CD8-positive, alpha-beta T cell (primary cell): ENCODE measurements at regions of chr12 and their contacts with region 1.

Region 1: GRCh38 chr12:51871126-51871525 is 16.8 kb upstream of the ANKRD33 start:
- DNase-seq: peak in 1 of 9 experiments; percentile 25
- ATAC-seq: no peak
- H3K4me3 ChIP-seq: no peak overlapping the region
- H3K4me3 Mint-ChIP-seq: no peak overlapping the region
- H3K27ac ChIP-seq: no peak overlapping the region
- H3K27ac Mint-ChIP-seq: no peak overlapping the region
- H3K4me1 ChIP-seq: peaks cover 6% of the 10 kb centered on the region
- H3K4me1 Mint-ChIP-seq: peaks cover 11% of the 10 kb centered on the region
- H3K27me3 ChIP-seq: peaks cover 8 to 15% of the 10 kb centered on the region in 2 experiments
- H3K27me3 Mint-ChIP-seq: peaks cover 49% of the 10 kb centered on the region
- CTCF ChIP-seq: no peak

Region 2: DNA sequence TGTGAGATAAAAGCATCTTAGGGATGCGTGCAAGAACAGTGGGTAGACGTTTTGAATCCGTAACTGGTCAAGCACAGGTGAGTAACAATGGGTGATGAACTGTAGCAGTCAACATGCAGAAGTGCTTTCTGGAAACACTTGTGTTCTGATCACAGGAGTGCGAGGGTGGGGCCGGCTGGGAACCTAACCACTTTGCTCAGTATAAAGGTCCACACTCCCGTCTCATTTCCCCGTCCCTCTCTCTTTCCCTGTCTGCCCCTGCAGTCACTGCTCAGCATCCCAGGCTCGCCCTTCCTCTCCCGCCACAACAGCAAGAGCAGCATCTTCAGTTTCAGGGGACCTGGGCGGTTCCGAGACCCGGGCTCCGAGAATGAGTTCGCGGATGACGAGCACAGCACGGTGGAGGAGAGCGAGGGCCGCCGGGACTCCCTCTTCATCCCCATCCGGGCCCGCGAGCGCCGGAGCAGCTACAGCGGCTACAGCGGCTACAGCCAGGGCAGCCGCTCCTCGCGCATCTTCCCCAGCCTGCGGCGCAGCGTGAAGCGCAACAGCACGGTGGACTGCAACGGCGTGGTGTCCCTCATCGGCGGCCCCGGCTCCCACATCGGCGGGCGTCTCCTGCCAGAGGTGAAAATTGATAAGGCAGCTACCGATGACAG is 149.7 kb before region 1 on chr12:
- CTCF ChIA-PET with region 1: no interaction called
- POLR2A ChIA-PET with region 1: no interaction called
- intact Hi-C with region 1: loop called in 1 of 2 experiments (anchors 1 kb)
- DNase-seq: peak; percentile 2 to 70 (median 44)
- ATAC-seq: peak; percentile 76
- H3K4me3 ChIP-seq: peak overlapping the region in 1 of 2 experiments; percentile 53
- H3K4me3 Mint-ChIP-seq: peak overlapping the region; percentile 63
- H3K27ac ChIP-seq: no peak overlapping the region
- H3K27ac Mint-ChIP-seq: no peak overlapping the region
- H3K4me1 ChIP-seq: peaks cover 4% of the 10 kb centered on the region
- H3K4me1 Mint-ChIP-seq: peaks cover 10% of the 10 kb centered on the region
- H3K27me3 ChIP-seq: peaks cover 0 to 9% of the 10 kb centered on the region in 2 experiments
- H3K27me3 Mint-ChIP-seq: peaks cover 16% of the 10 kb centered on the region
- CTCF ChIP-seq: no peak

Region 3: DNA sequence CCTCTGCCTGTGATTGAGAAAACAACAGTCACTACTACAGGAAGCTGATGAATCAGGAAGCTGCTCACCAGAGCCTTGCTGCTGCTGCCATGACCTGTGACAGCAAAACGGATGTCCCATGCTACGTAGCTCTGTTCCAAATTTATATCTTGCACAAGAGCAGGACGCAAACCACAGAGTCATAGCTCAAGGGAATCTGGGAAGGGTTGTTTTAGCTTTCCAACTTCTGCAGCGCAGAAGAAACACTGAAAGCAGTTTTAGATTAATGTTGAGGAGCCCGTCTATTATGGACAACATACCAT is 14.8 kb after region 1 on chr12:
- CTCF ChIA-PET with region 1: interaction called, 14 read pairs
- POLR2A ChIA-PET with region 1: interaction called, 3 read pairs
- intact Hi-C with region 1: no loop called
- DNase-seq: peak; percentile 8 to 77 (median 52)
- ATAC-seq: peak; percentile 97
- H3K4me3 ChIP-seq: no peak overlapping the region
- H3K4me3 Mint-ChIP-seq: peak overlapping the region; percentile 55
- H3K27ac ChIP-seq: peak overlapping the region in 1 of 2 experiments; percentile 62
- H3K27ac Mint-ChIP-seq: peak overlapping the region; percentile 91
- H3K4me1 ChIP-seq: peaks cover 8% of the 10 kb centered on the region
- H3K4me1 Mint-ChIP-seq: peaks cover 15% of the 10 kb centered on the region
- H3K27me3 ChIP-seq: no peaks in the 10 kb centered on the region
- H3K27me3 Mint-ChIP-seq: no peaks in the 10 kb centered on the region
- CTCF ChIP-seq: no peak